Thyroid gland (tissue), 4 donors: ENCODE measurements at regions of chr14 and their contacts with region 1.

Region 1: GRCh38 chr14:22778084-22778483 is 11.6 kb downstream of the OXA1L start:
- DNase-seq: no peak
- H3K4me3 ChIP-seq: no peak overlapping the region
- H3K27ac ChIP-seq: no peak overlapping the region
- H3K4me1 ChIP-seq: peaks cover 8 to 15% of the 10 kb centered on the region in 2 donors
- H3K27me3 ChIP-seq: no peaks in the 10 kb centered on the region
- CTCF ChIP-seq: no peak
- POLR2A ChIP-seq: no peak

Region 2: DNA sequence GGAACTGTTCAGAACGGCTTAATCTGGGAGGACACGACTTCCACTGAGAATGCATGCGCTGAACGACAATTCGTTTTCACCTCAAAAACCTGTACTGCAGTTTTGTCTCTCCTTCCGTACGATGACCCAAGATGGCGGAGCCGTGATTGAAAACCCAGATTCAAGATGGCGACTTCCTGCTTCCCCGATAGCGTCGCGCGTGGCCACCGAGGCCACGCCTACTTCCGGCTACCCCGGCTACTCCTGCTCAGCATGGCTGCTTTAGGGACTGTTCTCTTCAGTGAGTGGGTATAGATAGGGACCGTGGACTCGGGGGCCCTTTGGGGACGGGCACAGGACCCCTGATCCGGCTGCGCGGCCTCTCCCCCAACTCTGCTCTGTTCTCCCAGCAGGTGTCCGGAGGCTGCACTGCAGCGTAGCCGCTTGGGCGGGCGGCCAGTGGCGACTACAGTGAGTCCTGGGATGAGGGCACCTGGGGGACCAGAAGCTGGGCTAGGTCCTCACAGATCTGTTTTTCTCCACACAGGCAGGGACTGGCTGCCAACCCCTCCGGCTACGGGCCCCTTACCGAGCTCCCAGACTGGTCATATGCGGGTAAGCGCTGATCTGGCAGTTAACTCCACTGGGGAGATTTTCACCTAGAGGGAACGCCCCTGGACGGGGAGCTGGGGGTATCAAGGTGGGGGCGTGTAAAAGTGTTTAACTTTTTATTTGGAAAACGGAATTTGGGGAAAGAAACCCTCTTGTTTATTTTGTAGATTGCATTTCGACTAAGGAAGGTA is 51.8 kb after region 1 on chr14 and contains the start of gene MRPL52:
- intact Hi-C with region 1: loop called (anchors 10 kb)
- DNase-seq: peak; percentile 88 to 90
- H3K4me3 ChIP-seq: peak within 1 kb of the TSS; percentile 41 to 74 (median 66)
- H3K27ac ChIP-seq: peak within 1 kb of the TSS in 2 of 3 donors; percentile 63 to 81
- H3K4me1 ChIP-seq: peaks cover 9 to 10% of the 10 kb centered on the region in 2 donors
- H3K27me3 ChIP-seq: no peaks in the 10 kb centered on the region
- CTCF ChIP-seq: no peak
- POLR2A ChIP-seq: peak in 1 of 2 donors; percentile 59
- total RNA-seq, gene MRPL52: 43.7 to 166 (median 76.3) TPM